Activated CD4-positive, alpha-beta T cell treated with anti-CD3 and anti-CD28 coated beads for 36 hours (primary cell): ENCODE measurements at regions of chr1 and their contacts with region 1.

Region 1: DNA sequence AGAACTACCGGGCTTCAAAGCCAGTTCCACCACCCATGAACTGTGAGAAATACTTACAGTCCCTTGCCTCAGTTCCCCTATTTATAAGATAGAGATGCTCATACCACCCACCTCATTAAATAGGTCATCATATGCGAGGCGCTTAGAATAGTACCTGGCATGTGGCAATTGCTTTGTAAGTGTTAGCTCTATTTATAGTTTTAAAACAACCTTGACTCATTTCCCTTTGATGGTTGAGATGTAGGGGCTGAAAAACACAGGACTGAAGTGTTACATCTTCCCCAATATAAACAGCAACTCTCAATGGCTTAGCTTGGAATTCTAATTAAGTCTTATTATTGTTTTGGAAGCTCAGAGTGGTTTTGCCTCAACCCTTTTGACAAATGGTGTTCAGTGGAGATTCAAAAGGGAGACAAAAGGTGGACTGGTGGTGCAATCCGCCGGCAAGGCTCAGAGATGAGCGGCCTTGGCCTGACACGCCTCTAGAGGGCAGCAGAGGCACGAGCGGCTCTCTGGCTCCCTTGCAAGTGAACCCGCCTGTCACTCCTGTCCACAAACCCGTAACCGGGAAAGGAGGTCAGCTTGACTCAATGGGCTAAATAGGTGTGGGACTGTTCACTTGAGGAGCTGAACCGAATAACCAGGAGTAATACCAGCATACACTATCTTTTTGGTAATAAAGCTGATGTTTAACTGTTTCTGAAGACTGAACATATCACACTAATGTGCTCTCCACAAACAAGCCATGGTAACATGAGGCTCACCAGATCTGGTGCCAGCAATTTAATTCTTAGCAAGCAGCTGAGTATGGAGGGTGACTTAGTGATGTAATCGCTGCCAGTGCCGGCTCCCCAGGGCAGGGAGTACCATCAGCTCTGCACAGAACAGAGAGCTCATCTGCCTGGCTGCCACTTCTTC is 19.5 kb upstream of the SMYD2 start:
- DNase-seq: peak; percentile 91
- ATAC-seq: peak; percentile 81
- H3K4me3 Mint-ChIP-seq: no peak overlapping the region
- H3K27ac Mint-ChIP-seq: peak overlapping the region; percentile 34
- H3K4me1 Mint-ChIP-seq: peaks cover 15% of the 10 kb centered on the region
- H3K27me3 Mint-ChIP-seq: peaks cover 45% of the 10 kb centered on the region

Region 2: GRCh38 chr1:213987927-213988506 is 273.4 kb before region 1 on chr1 and contains the start of gene PROX1:
- CTCF ChIA-PET with region 1: no interaction called
- POLR2A ChIA-PET with region 1: no interaction called
- intact Hi-C with region 1: no loop called
- DNase-seq: peak; percentile 72
- ATAC-seq: peak; percentile 86
- H3K4me3 Mint-ChIP-seq: peak within 1 kb of the TSS; percentile 81
- H3K27ac Mint-ChIP-seq: peak within 1 kb of the TSS; percentile 51
- H3K4me1 Mint-ChIP-seq: peaks cover 37% of the 10 kb centered on the region
- H3K27me3 Mint-ChIP-seq: peaks cover 91% of the 10 kb centered on the region
- total RNA-seq, gene PROX1: 0.09 to 0.14 TPM

Region 3: DNA sequence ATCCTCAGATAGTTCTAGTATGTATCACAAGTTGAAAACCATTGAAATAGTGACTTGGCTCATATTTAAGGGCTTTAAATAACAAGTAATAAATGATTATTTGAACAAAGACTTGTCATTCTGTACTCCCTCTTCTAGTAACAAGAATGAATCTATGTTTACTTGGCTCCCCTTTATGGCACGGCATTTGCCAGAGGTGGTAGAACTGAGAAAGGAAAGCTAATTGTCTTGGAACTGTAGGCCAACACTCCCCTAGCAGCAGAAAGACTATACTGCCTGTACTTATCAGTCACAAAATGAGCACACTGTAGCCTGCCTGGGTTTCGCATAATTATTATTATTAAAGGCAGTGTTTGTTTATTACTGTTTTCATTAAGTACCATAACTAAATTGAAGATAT is 10.1 kb before region 1 on chr1:
- CTCF ChIA-PET with region 1: interaction called, 27 read pairs
- POLR2A ChIA-PET with region 1: no interaction called
- intact Hi-C with region 1: no loop called
- DNase-seq: no peak
- ATAC-seq: no peak
- H3K4me3 Mint-ChIP-seq: no peak overlapping the region
- H3K27ac Mint-ChIP-seq: no peak overlapping the region
- H3K4me1 Mint-ChIP-seq: no peaks in the 10 kb centered on the region
- H3K27me3 Mint-ChIP-seq: peaks cover 18% of the 10 kb centered on the region

Region 4: GRCh38 chr1:214292322-214292721 is 30.9 kb after region 1 on chr1:
- CTCF ChIA-PET with region 1: interaction called, 13 read pairs
- POLR2A ChIA-PET with region 1: no interaction called
- intact Hi-C with region 1: no loop called
- DNase-seq: no peak
- ATAC-seq: no peak
- H3K4me3 Mint-ChIP-seq: no peak overlapping the region
- H3K27ac Mint-ChIP-seq: no peak overlapping the region
- H3K4me1 Mint-ChIP-seq: peaks cover 43% of the 10 kb centered on the region
- H3K27me3 Mint-ChIP-seq: no peaks in the 10 kb centered on the region

Region 5: GRCh38 chr1:214354440-214355148 is 93.1 kb after region 1 on chr1:
- CTCF ChIA-PET with region 1: interaction called, 11 read pairs
- POLR2A ChIA-PET with region 1: no interaction called
- intact Hi-C with region 1: no loop called
- DNase-seq: no peak
- ATAC-seq: no peak
- H3K4me3 Mint-ChIP-seq: no peak overlapping the region
- H3K27ac Mint-ChIP-seq: no peak overlapping the region
- H3K4me1 Mint-ChIP-seq: no peaks in the 10 kb centered on the region
- H3K27me3 Mint-ChIP-seq: no peaks in the 10 kb centered on the region

Region 6: GRCh38 chr1:214566158-214567104 is 305.0 kb after region 1 on chr1:
- CTCF ChIA-PET with region 1: no interaction called
- POLR2A ChIA-PET with region 1: no interaction called
- intact Hi-C with region 1: loop called in 1 of 2 experiments (anchors 10 kb)
- DNase-seq: peak; percentile 61
- ATAC-seq: peak; percentile 82
- H3K4me3 Mint-ChIP-seq: no peak overlapping the region
- H3K27ac Mint-ChIP-seq: no peak overlapping the region
- H3K4me1 Mint-ChIP-seq: peaks cover 11% of the 10 kb centered on the region
- H3K27me3 Mint-ChIP-seq: peaks cover 9% of the 10 kb centered on the region